Posterior vena cava (tissue), 2 donors: ENCODE measurements at regions of chr1 and their contacts with region 1.

Region 1: GRCh38 chr1:94316836-94317789 is 79.7 kb upstream of the ARHGAP29 start:
- DNase-seq: no peak

Region 2: DNA sequence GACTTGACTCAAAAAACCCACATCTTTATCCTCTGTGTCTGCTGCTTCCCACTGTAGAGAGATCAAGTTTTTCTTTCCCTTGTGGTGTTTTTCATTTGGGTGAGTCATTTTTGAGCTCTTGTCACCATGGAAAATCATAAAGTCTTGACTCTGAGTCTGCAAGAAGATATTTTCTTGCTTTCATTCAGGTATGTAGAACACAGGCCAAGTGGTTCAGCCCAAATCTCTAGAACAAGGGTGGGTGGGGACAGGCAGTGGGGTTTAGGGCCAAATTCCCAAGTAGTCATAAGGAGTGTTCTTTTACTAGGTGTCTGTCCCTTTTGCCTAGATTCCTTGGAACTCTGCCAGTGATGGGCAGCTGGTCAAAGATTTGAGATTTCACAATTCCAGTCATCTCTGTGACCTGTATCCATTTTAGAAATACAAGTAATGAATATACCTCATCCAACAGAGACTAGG is 58.2 kb before region 1 on chr1:
- intact Hi-C with region 1: loop called in 1 of 2 experiments (anchors 2 kb)
- DNase-seq: no peak